Pancreas (tissue), 10 donors: ENCODE measurements at regions of chr2 and their contacts with region 1.

Region 1: DNA sequence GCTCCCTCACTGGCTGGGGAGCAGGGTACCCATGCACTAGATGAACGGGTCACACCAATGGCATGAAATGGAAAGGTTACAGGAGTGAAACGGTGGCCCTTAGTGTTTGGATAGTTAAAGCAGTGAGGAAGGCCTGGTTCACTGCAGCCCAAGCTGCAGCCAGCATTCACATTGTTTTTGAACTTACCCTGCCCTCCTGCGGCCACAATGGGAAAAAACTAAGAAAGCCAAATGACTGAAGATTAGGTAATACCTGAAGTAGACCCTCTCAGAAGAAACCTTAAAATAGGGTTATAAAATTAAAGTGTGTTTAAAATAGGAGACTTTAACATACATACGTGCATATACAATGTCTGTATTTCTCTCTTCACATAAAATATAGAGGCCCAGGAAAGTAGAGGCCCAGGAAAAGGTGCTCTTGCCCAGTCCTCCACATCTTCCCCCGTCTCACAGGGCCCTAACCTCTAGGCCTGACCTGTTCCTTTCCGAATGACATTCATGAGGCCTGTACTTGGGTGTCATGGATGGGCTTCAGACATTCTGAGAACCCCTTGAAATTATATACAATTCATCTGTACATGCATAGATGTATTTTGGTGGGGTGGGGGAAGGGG is 33.3 kb downstream of the DOK1 start:
- DNase-seq: peak in 5 of 6 donors; percentile 33 to 77 (median 50)
- ATAC-seq: peak; percentile 89 to 99 (median 98)
- H3K4me3 ChIP-seq: no peak overlapping the region
- H3K27ac ChIP-seq: no peak overlapping the region
- H3K4me1 ChIP-seq: no peaks in the 10 kb centered on the region
- H3K27me3 ChIP-seq: no peaks in the 10 kb centered on the region
- CTCF ChIP-seq: peak; percentile 24 to 51 (median 44)

Region 2: DNA sequence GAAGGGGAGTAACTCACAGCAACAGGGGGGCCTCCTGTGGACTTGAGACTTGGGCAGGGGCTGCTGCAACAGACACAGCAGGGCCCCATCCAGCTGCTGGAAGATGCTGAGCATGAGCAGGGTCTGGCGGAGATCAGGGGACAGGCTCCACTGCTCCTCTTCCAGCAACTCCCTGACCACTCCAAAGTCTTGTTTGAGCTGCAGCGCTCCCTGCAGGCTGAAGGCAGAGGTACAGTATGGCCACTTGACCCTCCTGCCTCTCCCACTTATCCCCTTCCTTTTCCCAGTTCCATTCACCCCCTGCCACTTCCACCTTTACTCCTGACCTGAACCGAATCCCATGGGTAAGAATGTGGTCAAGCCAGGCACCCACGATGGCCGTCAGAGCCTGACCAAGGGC is 112.9 kb before region 1 on chr2:
- intact Hi-C with region 1: loop called in 2 of 3 experiments (anchors 5 kb)
- DNase-seq: no peak
- ATAC-seq: no peak
- H3K4me3 ChIP-seq: no peak overlapping the region
- H3K27ac ChIP-seq: no peak overlapping the region
- H3K4me1 ChIP-seq: peaks cover 5 to 16% (median 7%) of the 10 kb centered on the region in 3 donors
- H3K27me3 ChIP-seq: no peaks in the 10 kb centered on the region
- CTCF ChIP-seq: no peak

Region 3: DNA sequence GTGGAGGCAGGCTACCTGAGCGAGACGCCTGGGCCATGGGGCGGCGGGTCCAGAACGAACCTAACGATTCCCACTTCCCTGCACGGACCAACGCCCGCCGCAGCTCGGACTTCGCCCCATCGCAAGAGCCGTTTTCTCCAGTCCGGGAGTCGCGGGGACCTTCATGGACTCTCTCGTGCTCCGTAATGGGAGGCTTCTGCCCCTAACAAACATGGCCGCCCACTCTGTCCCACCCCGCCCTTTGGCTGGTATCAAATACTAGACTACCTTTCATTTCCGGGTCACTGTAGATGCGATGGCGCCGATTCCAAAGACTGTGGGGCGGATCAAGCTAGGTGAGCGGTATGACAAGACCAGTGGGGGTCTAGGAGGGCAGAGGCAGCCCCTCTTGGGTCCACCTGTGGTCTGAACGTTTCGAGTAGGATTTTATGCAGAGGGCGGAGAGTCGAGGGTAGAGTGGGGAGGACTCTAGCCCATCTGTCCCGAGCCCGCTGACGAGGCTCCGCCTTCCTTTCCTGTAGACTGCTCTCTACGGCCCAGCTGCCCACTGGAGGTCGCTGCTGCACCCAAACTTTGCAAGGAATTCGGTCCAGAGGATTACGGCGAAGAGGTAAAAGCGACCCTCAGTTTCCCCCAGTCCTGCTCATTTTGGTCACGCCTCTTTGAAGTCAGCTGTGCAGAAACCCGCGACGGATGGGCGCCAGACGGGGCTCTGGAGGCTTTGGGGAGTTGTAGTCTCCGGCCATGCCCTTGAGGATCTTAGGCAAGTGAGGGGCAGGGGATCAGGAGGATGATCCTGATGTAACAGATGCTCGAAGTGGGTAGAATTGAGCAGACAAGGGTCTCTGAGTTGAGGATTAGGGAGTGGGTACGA is 104.7 kb before region 1 on chr2 and contains the starts of genes CCDC142 and TTC31:
- intact Hi-C with region 1: loop called in 2 of 3 experiments (anchors 5 kb)
- DNase-seq: peak; percentile 92 to 97 (median 96)
- ATAC-seq: peak; percentile 96 to 99 (median 98)
- H3K4me3 ChIP-seq: peak within 1 kb of the TSS; percentile 58 to 94 (median 78)
- H3K27ac ChIP-seq: peak within 1 kb of the TSS; percentile 46 to 87 (median 72)
- H3K4me1 ChIP-seq: peaks cover 5 to 18% (median 11%) of the 10 kb centered on the region in 3 donors
- H3K27me3 ChIP-seq: no peaks in the 10 kb centered on the region
- CTCF ChIP-seq: peak; percentile 70 to 83 (median 73)
- total RNA-seq, gene CCDC142: 4.9 to 11.6 (median 5.7) TPM
- total RNA-seq, gene TTC31: 10.1 to 17.2 (median 11.3) TPM

Region 4: DNA sequence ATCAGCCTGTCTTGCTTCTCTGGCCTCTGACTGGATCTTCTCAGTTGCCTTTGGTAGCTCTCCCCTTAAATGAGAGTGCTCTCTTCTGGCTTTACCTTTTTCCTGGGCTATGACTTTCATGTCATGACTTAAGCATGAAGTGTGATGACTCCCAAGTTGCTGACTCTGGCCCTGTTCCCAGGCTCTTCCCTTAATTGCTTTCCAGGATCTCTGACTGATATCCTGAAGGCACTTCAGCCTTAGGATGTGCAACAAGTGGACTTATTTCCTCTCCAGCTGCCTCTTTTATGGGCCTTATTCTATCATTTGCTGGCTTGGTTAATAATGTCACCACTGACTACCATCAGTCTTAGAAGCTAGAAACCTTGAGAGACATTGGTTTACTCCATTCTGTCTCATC is 83.7 kb after region 1 on chr2:
- intact Hi-C with region 1: no loop called
- DNase-seq: no peak
- ATAC-seq: no peak
- H3K4me3 ChIP-seq: no peak overlapping the region
- H3K27ac ChIP-seq: no peak overlapping the region
- H3K4me1 ChIP-seq: no peaks in the 10 kb centered on the region
- H3K27me3 ChIP-seq: no peaks in the 10 kb centered on the region
- CTCF ChIP-seq: no peak